Gastrocnemius medialis (tissue), 4 donors: ENCODE measurements at regions of chr1 and their contacts with region 1.

Region 1: DNA sequence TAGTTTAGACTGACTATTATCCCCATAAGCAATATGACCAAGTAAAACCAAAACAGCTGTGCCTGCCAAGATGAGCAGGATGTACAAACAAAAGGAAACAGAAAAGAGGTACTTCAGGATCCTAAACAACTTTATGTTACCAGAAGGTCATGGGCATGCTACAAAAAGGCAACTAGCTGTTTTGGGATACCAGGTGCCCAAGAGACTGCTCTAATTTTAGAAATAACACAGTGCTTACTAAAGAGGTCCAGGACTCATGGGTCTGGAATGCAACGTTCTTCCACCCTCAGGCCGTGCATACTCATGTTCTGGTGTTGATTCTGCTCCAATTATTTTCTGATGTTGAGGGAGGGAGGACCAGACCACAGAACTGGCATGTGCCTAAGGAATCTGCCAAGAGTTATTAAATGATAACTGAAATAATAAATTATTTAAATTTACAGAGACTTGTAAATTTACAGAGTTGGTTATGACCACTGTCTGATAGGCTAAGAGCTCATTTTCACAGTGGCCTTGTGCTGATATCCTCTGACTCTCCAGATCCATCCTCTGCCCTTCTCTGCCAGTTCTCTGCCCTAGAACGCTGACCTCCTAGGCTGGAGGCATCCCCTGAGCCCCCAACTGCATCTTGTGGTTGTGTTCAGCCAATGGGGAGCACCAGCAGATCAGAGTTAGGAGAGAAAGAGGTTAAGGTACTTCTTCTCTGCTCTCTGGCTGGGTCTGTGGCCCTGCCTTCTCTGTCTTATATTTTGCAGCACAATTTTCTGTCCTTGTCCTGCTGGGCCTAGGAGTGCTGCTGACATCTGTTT is 37.7 kb upstream of the BCL10 start:
- DNase-seq: peak; percentile 59 to 68
- ATAC-seq: peak; percentile 96
- H3K4me3 ChIP-seq: no peak overlapping the region
- H3K27ac ChIP-seq: peak overlapping the region; percentile 83 to 90 (median 85)
- H3K4me1 ChIP-seq: peaks cover 29 to 32% of the 10 kb centered on the region in 2 donors
- H3K27me3 ChIP-seq: no peaks in the 10 kb centered on the region
- CTCF ChIP-seq: no peak
- POLR2A ChIP-seq: peak in 1 of 2 donors; percentile 10

Region 2: DNA sequence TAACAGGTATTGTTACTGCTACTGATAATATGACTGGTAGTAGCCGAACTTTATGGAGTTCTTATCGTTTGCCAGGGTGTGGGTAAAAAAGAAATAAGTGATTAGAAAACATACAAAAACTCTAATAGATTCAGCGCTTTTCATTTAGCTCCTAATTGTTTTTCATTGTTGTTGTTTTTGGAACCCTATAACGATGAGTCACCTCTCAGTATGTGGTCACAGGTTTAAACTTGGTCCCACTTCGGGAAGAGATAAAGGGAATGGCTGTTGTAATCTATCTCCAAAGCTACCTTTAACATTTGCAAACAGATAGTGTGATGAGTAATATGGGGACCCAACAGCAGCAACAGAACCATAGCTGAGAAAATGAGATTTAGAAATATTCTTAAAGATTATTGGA is 25.0 kb after region 1 on chr1:
- in situ Hi-C with region 1: no loop called
- intact Hi-C with region 1: loop called (anchors 1 kb)
- DNase-seq: no peak
- ATAC-seq: peak; percentile 55 to 65
- H3K4me3 ChIP-seq: no peak overlapping the region
- H3K27ac ChIP-seq: peak overlapping the region; percentile 61 to 82 (median 78)
- H3K4me1 ChIP-seq: peaks cover 41 to 47% of the 10 kb centered on the region in 2 donors
- H3K27me3 ChIP-seq: no peaks in the 10 kb centered on the region
- CTCF ChIP-seq: no peak
- POLR2A ChIP-seq: no peak

Region 3: DNA sequence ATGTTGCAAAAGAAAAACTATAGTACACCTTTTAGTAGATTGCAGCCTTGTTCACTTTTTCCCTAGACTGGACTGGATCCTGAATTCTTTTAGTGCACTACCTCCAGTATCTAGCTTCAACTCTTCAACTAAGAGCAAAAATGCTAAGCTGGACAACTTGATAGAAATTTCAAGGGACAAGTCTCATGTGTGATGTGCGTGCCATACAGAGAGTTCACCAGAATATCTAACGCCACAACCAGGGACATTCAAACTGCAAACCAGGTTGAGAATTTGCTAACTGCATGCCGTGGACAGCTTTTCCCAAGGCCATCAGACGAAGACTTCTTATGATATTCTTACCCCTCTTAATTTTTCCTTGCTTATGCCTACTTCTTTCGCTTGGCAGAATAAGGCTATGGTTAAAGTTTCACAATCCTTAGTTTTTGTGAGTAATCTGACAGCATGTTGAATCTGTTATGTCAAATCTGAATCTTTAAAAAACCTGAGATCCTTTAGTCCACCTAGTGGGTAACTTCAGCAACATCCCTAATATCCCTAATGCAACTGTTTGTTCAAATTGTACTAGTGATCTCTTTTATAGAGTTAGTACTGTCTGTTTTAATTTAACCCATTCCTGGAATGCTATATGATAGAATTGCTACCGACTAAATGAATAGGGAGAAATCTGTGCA is 84.4 kb after region 1 on chr1:
- in situ Hi-C with region 1: loop called in 2 of 4 experiments (anchors 5 kb)
- intact Hi-C with region 1: loop called (anchors 2 kb)
- DNase-seq: no peak
- ATAC-seq: peak; percentile 75 to 76
- H3K4me3 ChIP-seq: no peak overlapping the region
- H3K27ac ChIP-seq: peak overlapping the region in 1 of 4 donors; percentile 11
- H3K4me1 ChIP-seq: peaks cover 3 to 10% of the 10 kb centered on the region in 2 donors
- H3K27me3 ChIP-seq: no peaks in the 10 kb centered on the region
- CTCF ChIP-seq: peak; percentile 19 to 60 (median 42)
- POLR2A ChIP-seq: no peak

Region 4: DNA sequence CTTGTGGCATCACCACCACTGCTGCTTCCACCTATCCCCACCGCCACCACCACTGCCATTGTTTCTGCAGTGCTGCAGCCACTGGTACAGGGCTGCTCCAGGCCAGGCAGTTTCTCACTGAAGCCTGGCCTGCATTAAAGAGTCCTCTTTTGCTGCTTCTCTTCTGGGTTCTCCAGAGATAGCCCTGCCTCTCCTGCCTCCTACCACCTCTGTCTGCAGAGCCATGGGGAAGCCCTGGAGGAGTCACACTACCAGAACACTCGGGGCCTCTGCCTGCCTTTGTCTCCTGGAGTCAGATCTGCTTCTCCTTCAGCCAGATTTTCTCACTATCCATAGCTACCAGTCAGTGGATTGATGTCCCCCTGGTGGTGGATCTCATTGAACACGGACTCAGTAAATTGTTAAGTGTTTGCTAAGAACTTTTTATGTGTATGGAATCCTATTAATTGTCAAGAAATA is 188.6 kb after region 1 on chr1:
- in situ Hi-C with region 1: loop called in 2 of 4 experiments (anchors 5 to 10 kb)
- intact Hi-C with region 1: no loop called
- DNase-seq: peak in 1 of 2 donors; percentile 9
- ATAC-seq: peak; percentile 77 to 86
- H3K4me3 ChIP-seq: no peak overlapping the region
- H3K27ac ChIP-seq: no peak overlapping the region
- H3K4me1 ChIP-seq: no peaks in the 10 kb centered on the region
- H3K27me3 ChIP-seq: no peaks in the 10 kb centered on the region
- CTCF ChIP-seq: peak in 4 of 5 experiments; percentile 41 to 68 (median 51)
- POLR2A ChIP-seq: no peak